Posterior vena cava (tissue), 2 donors: ENCODE measurements at regions of chr20 and their contacts with region 1.

Region 1: DNA sequence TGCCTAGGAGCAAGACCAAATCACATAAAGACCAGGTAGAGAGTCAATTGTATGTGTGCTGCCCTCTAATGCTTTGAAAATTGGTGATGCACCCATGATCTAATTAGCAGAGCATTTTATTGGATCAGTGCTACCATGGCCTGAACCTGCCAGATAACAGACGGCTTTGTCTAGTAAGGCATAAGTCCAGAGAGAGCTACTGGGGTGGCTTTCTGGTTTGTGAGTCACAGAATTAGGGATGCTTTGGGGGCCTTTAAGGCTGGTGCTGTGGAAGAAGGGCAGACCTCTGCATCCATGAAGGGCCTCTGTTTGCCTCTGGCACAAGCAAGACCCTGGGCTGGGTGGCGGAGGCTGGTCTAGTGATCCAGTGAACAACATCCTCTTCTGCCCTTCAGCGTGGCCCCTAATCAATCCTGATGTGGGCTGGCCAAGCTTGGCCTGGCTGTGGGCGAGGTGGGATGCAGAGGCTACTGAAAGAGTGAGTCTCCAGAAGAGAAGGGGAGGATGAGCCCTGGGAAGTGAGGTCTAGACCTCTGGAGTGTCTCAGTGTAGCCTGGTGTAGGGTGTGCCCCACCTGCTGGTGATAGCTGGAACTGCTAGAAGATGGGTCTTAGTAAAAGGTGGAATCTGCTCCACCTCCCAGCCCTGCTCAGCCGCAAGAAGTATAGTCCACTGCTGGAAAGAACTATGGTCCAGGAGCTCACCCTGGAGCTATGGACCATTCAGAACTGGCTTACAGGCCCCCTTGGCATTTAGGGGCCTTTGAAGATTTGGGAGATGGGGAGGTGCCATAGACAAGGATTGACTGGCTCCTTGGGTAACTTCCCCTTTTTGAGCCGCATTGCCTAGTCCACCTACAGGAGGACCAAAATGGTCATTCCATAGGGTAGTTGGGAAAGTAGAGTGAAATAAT is 36.7 kb upstream of the AAR2 start:
- DNase-seq: peak; percentile 88

Region 2: GRCh38 chr20:35994994-35995453 is 204.6 kb before region 1 on chr20:
- intact Hi-C with region 1: loop called in 1 of 2 experiments (anchors 5 kb)
- DNase-seq: peak; percentile 92

Region 3: DNA sequence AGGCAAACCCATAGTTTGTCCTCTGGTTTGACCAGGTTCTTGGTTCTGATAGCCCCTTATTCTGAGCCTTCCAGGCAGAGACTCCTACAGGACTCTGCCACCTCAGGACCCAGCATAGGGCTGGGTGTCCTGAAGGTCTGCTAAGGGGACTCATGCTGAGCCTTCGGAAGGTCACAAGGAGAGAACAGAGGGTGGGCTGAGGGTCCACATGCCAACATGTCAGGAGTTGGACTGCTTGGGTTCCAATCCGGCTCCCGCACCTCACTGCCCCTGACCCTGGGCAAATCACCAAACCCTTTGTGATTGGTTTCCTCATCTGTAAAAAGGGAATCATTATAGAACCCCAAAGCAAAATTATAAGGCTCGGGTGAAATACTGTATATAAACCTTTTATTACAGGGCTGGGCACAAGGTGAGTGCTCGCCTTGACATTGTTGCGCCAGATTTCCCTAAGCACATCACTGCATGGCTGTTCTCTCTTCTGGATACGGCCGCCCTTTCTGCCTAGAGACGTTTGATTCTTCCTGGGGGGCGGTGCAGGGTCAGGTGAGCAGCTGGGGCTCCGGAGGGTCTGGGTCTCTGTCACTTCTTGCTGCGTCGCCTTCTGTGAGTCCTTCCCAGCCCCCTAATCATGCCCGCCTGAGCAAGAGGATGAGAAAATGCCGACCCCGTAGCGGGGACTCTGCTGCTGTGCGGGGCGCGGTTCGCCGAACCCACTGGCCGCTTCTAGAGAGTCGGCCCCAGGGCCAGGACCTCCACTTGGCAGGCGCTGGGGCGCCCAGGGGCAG is 135.5 kb before region 1 on chr20:
- intact Hi-C with region 1: no loop called
- DNase-seq: no peak

Region 4: DNA sequence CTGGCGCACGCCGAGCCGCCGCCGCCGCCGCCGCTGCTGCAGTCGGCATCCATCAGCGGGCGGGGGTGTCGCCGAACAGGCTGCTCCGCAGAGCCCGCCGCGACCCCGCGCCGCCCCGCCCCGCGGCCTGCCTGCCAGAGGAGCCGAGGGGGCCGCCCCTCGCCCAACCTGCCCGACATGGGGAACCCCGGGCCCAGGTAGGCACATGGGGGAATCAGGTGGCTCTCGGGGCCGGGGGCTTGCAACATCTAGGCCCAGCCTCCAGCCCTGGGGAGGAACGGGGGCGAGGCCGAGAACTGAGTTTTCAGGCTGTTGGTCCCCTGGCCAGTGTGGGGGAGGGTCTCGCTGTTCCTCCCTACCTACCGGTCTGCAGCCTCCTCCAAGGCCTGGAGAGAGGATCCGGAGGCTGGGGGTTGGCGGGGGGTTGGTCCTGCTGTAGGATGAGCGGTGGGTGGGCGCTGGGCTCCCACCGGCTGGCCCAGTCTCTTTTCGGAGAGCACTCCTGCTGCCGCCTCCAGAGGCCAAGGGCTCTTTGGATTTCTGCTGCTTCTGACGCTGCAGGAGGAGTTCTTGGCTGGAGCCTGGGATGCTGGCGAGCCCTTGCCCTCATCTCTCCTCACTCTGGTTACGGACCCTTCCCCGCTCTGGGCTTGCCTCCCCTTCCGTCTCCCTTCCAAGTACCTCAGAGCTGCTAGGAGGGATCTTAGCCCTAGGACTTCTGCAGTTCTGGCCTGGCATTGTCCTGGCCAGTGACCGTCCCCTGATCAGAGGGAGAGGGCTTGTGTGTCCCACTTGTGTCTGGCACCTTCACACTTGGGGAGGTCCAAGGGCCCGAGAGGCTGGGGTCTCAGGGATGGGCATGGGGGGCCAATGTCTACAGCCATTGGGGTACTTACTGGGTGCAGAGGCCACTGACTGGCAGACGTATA is 44.6 kb before region 1 on chr20 and contains the start of gene EPB41L1:
- intact Hi-C with region 1: loop called in 1 of 2 experiments (anchors 5 kb)
- DNase-seq: no peak
- total RNA-seq, gene EPB41L1: 39.3 to 58.2 TPM

Region 5: GRCh38 chr20:36439040-36439730 is 239.6 kb after region 1 on chr20:
- intact Hi-C with region 1: loop called in 1 of 2 experiments (anchors 5 kb)
- DNase-seq: peak; percentile 89